ENCODE measurements at regions of chr22 and their contacts with region 1.

Region 1: GRCh38 chr22:28075358-28075981 is 156.4 kb upstream of the PITPNB start:
- DNase-seq: peak; percentile 46
- H3K4me3 ChIP-seq: no peak overlapping the region
- CTCF ChIP-seq: no peak

Region 2: DNA sequence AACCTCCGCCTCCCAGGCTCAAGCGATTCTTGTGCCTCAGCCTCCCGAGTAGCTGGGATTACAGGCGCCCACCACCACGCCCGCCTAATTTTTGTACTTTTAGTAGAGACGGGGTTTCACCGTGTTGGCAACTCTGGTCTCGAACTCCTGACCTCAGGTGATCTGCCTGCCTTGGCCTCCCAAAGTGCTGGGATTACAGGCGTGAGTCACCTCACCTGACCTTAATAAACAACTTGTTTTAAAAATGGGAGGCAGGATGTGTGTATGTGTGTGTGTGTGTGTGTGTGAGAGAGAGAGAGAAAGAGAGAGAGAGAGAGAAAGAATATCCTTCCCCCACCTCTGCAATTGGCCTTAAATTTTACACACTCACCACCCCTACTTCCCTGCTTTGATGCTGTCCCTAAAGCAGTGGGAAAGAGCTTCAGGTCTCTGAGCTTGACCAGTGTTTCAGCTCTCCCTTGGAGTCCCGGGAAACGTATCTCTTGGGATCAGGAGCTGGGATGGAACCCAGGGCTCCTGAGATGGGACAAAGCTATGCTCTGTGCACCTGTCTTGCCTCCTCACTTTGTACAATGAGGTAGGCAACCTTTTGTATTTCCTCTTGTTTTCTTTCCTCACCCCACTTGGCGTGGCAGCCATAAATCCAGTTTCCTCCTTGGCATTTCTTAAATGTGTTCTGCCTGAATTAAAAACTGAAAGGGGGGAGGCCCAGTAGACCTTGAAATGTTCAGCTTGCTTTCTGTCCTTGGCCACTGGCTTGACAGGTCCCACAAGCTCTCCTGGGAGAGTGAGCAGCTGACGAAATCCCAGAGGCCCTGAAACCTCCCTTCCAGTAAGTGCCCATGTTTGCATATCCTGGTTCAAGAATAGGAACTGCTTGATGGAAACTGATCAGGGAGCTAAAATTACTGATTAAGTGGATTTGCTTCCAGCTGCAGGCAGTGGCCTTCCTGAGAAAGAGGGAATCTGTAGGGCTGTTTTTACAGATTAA is 742.7 kb after region 1 on chr22:
- in situ Hi-C with region 1: loop called (anchors 10 kb)
- DNase-seq: no peak
- H3K4me3 ChIP-seq: no peak overlapping the region
- CTCF ChIP-seq: no peak

Region 3: GRCh38 chr22:28841111-28841510 is 765.6 kb after region 1 on chr22:
- in situ Hi-C with region 1: loop called (anchors 10 kb)
- DNase-seq: no peak
- H3K4me3 ChIP-seq: no peak overlapping the region
- CTCF ChIP-seq: no peak